Naive thymus-derived CD4-positive, alpha-beta T cell (primary cell): ENCODE measurements at regions of chr12 and their contacts with region 1.

Region 1: GRCh38 chr12:121550974-121551634 is 29.7 kb downstream of the KDM2B start:
- DNase-seq: no peak
- ATAC-seq: no peak
- H3K4me3 ChIP-seq: no peak overlapping the region
- H3K4me3 Mint-ChIP-seq: no peak overlapping the region
- H3K27ac ChIP-seq: no peak overlapping the region
- H3K27ac Mint-ChIP-seq: no peak overlapping the region
- H3K4me1 ChIP-seq: peaks cover 0 to 12% of the 10 kb centered on the region in 2 donors
- H3K4me1 Mint-ChIP-seq: peaks cover 0 to 7% (median 3%) of the 10 kb centered on the region in 7 donors
- H3K27me3 ChIP-seq: no peaks in the 10 kb centered on the region
- H3K27me3 Mint-ChIP-seq: no peaks in the 10 kb centered on the region

Region 2: DNA sequence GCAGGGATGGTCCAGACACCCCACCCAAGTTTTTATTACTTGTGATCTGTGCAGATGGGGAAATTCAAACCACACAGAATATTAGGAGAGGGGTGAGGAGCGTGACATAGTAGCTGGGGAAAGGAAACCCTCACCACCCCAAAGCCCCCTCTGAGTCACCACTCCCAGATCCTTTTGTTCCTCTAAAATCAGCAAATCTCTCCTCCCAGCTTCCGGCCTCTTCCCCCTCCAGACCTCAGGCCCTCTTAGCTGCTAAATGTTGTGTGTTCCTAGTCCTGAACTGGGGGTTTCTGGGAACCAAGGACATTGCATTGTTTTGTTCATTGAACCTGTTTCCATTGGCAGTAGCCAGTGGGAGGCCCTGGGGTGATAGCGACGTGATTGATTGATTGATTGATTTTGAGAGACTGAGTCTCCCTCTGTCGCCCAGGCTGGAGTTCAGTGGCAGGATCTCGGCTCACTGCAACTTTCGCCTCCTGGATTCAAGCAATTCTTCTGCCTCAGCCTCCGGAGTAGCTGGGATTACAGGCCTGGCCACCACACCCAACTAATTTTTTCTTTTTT is 69.3 kb after region 1 on chr12:
- CTCF ChIA-PET with region 1: interaction called, 69 read pairs
- POLR2A ChIA-PET with region 1: interaction called, 5 read pairs
- intact Hi-C with region 1: loop called (anchors 1 kb)
- DNase-seq: no peak
- ATAC-seq: no peak
- H3K4me3 ChIP-seq: no peak overlapping the region
- H3K4me3 Mint-ChIP-seq: no peak overlapping the region
- H3K27ac ChIP-seq: no peak overlapping the region
- H3K27ac Mint-ChIP-seq: peak overlapping the region in 1 of 9 donors; percentile 55
- H3K4me1 ChIP-seq: peaks cover 7% of the 10 kb centered on the region in 2 donors
- H3K4me1 Mint-ChIP-seq: peaks cover 4 to 12% (median 8%) of the 10 kb centered on the region in 7 donors
- H3K27me3 ChIP-seq: no peaks in the 10 kb centered on the region
- H3K27me3 Mint-ChIP-seq: no peaks in the 10 kb centered on the region

Region 3: DNA sequence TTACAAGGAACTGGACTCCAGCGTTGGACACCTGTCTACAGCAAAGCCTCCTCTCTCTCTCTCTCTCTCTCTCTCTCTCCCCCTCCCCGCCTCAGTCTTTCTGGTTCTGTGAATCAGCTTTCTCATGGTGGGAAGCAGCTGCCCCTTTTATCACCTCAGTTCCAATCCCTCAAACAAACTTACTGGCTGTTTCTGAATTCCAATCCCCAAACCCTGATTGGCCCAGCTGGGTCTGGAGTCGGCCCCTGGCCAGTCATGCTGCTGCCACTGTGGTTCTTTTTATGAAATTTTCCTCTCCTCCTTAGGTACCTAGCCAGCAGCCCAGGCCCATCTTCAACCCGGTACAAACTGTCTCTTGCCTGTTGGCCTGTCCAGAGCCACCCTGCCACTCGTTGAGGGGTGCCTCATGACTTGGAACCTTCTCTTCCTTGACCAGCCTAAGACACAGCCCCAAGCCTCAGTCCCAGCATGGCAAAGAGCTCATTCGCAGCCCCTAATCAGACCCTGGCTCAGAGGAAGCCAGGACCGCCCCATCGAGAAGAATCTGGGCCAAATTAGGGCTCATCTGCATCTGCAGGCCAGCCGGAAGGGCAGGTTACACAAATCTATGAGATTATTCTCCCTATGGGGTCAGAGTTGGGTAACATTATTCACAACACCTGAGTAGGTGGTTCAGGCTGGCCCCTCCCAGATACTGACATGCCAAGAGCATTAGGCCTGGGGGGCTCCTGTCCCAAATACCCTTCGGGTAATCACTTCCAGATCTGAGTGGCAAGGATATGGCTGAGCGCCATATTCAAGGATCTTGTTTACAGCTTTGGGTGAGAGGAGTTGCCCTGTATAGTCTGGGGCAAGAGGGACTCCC is 127.8 kb after region 1 on chr12:
- CTCF ChIA-PET with region 1: interaction called, 40 read pairs
- POLR2A ChIA-PET with region 1: interaction called, 8 read pairs
- intact Hi-C with region 1: loop called (anchors 1 kb)
- DNase-seq: no peak
- ATAC-seq: no peak
- H3K4me3 ChIP-seq: no peak overlapping the region
- H3K4me3 Mint-ChIP-seq: no peak overlapping the region
- H3K27ac ChIP-seq: no peak overlapping the region
- H3K27ac Mint-ChIP-seq: peak overlapping the region in 3 of 9 donors; percentile 34 to 59 (median 57)
- H3K4me1 ChIP-seq: no peaks in the 10 kb centered on the region
- H3K4me1 Mint-ChIP-seq: peaks cover 4 to 14% (median 6%) of the 10 kb centered on the region in 7 donors
- H3K27me3 ChIP-seq: no peaks in the 10 kb centered on the region
- H3K27me3 Mint-ChIP-seq: no peaks in the 10 kb centered on the region

Region 4: DNA sequence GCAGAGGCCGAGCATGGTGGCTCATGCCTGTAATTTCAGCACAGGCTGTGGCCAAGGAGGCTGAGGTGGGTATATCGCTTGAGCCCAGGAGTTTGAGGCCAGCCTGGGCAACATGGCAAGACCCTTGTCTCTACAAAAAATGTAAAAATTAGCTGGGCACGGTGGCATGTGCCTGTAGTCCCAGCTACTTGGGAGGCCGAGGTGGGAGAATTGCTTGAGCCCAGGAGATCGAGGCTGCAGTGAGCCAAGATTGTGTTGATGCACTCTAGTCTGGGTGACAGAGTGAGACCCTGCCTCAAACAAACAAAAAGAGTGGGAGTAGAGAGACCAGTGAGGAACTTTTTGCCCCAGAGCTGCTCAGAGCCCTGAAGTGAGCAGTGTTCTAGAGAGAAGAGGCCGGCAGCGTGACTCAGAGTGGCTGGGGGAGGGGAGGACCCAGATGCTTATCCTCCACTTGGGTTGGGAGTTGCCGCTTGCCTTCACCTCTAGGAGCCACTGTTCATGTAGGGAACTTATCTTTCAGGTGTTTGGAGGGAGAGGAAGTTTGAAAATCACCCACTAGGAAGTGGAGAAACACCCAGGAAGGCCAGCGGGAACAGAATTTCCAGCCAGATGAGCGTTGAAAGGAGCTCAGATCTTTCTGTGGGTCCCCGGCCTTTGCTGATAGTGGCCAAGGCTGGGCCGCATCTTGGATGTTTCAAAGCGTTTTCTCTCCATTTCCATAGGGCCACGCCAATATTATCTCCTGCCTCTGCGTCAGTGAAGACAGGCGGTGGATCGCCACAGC is 382.6 kb after region 1 on chr12:
- CTCF ChIA-PET with region 1: no interaction called
- POLR2A ChIA-PET with region 1: no interaction called
- intact Hi-C with region 1: no loop called
- DNase-seq: no peak
- ATAC-seq: no peak
- H3K4me3 ChIP-seq: no peak overlapping the region
- H3K4me3 Mint-ChIP-seq: no peak overlapping the region
- H3K27ac ChIP-seq: no peak overlapping the region
- H3K27ac Mint-ChIP-seq: no peak overlapping the region
- H3K4me1 ChIP-seq: no peaks in the 10 kb centered on the region
- H3K4me1 Mint-ChIP-seq: peaks cover 3 to 6% (median 5%) of the 10 kb centered on the region in 7 donors
- H3K27me3 ChIP-seq: no peaks in the 10 kb centered on the region
- H3K27me3 Mint-ChIP-seq: peaks cover 0 to 5% (median 0%) of the 10 kb centered on the region in 5 donors